ENCODE measurements at regions of chr7 and their contacts with region 1.

Region 1: GRCh38 chr7:139016931-139017511 is 18.8 kb downstream of the ZC3HAV1L start:
- DNase-seq: no peak
- ATAC-seq: peak; percentile 71
- H3K4me3 Mint-ChIP-seq: no peak overlapping the region
- H3K27ac Mint-ChIP-seq: no peak overlapping the region
- H3K4me1 Mint-ChIP-seq: peaks cover 2% of the 10 kb centered on the region
- H3K27me3 Mint-ChIP-seq: peaks cover 9% of the 10 kb centered on the region
- CTCF ChIP-seq: no peak

Region 2: DNA sequence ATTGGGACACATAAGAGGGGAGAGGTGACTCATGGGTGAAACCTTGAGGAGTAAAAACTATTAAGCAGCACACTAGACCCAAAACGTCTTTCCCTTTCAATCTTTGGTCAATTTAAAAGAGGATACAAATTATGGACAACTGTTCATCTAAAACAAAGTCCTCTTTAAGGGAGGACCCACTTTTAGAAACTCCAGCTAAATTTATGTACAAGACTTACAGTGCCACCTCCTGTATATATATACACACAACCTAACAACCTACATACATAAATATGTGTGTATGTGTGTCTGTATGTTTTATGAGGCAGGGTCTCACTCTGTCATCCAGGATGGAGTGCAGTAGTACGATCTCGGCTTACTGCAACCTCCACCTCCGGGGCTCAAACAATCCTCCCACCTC is 110.6 kb after region 1 on chr7:
- CTCF ChIA-PET with region 1: interaction called, 25 read pairs
- POLR2A ChIA-PET with region 1: no interaction called
- intact Hi-C with region 1: loop called (anchors 1 kb)
- DNase-seq: no peak
- ATAC-seq: peak; percentile 49
- H3K4me3 Mint-ChIP-seq: no peak overlapping the region
- H3K27ac Mint-ChIP-seq: no peak overlapping the region
- H3K4me1 Mint-ChIP-seq: peaks cover 35% of the 10 kb centered on the region
- H3K27me3 Mint-ChIP-seq: no peaks in the 10 kb centered on the region
- CTCF ChIP-seq: no peak

Region 3: DNA sequence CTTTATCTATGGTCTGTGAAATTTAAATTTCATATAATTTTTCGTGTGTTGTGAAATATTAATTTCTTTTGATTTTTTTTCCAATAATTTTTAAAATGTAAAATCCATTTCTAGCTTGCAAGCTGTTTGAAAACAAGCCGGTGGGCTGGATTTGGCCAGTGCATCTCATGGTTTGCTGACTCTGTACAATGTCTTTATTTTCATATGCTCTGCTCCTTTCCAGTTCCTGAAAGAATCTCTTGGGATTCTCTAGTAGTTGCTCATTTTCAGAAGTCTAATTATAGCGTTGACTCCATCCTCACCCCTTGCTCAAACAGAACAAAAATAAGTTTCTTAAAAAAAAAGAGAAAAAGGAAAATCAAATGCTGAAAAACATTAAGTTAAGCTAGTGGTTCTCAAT is 235.4 kb after region 1 on chr7:
- CTCF ChIA-PET with region 1: no interaction called
- POLR2A ChIA-PET with region 1: no interaction called
- intact Hi-C with region 1: loop called (anchors 5 kb)
- DNase-seq: no peak
- ATAC-seq: no peak
- H3K4me3 Mint-ChIP-seq: no peak overlapping the region
- H3K27ac Mint-ChIP-seq: no peak overlapping the region
- H3K4me1 Mint-ChIP-seq: no peaks in the 10 kb centered on the region
- H3K27me3 Mint-ChIP-seq: no peaks in the 10 kb centered on the region
- CTCF ChIP-seq: no peak

Measured in activated B cell treated with CpG ODN at 0.5 μM for 24 hours (primary cell).